GM13976 (cell line): ENCODE measurements at regions of chr1 and their contacts with region 1.

Region 1: DNA sequence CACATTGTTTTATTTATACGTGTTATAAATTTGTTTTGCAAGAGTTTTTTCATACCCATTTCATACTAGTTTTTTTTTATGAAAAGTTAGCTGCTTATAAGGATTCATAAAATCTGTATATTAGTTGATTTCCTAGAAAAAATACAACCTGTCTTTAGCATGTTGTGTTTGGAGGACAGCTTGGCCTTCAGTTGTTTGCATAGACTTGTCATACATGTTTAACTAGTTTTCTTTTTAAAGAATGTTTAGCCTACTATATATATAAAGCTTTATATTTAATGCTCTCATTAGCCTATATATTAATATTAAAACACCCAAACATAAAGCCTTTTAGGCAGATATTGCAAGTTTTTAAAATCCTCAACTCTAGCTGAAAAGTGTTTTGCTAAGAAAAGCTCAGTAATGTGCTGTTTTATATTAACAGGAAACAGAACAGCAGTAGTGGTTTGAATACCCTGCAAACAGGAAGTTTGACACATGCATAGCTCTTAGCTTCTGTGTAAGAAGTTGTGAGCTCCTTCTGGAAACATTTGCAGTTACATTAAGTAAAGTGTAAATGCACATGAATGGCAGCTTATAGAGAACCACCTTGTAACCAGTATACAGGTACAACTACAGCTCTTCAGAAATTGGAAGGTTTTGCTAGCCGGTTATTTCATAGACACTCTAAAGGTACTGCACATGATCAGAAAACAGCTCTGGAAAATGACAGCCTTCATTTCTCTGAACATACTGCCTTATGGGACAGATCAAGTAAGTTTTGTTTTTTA is at the start of gene PRKACB:
- DNase-seq: peak; percentile 19
- CTCF ChIP-seq: no peak

Region 2: DNA sequence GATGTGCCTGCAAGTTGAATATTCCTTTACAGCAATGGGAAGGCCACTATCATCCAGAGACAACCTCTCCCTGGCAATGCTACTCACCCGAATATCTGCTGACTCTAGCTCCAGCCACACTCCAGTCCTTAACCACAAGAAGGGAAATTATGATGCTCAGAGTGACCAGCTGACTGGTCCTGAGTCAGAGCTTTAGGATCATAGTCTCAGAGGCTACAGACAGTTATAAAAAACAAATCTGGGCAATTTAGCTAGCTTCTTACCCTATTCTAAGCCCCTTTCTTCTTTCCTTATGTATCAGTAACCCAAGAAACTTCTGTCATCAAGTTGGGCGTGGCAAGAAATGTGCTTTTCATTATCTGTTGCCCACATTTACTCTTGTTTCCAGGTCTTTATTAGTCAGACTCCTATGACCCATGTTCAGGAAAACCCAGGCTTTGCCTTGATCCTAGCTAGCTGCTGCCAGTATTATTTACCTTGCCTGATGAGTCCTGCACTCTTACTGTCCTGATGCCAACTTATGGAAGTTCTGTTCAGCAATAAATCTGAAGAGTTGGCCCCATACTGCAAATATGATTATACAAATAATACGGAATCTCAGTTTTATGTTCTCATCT is 352.1 kb before region 1 on chr1:
- in situ Hi-C with region 1: no loop called
- DNase-seq: no peak
- CTCF ChIP-seq: no peak

Region 3: GRCh38 chr1:84107955-84108354 is 36.0 kb before region 1 on chr1:
- in situ Hi-C with region 1: no loop called
- DNase-seq: no peak
- CTCF ChIP-seq: no peak

Region 4: DNA sequence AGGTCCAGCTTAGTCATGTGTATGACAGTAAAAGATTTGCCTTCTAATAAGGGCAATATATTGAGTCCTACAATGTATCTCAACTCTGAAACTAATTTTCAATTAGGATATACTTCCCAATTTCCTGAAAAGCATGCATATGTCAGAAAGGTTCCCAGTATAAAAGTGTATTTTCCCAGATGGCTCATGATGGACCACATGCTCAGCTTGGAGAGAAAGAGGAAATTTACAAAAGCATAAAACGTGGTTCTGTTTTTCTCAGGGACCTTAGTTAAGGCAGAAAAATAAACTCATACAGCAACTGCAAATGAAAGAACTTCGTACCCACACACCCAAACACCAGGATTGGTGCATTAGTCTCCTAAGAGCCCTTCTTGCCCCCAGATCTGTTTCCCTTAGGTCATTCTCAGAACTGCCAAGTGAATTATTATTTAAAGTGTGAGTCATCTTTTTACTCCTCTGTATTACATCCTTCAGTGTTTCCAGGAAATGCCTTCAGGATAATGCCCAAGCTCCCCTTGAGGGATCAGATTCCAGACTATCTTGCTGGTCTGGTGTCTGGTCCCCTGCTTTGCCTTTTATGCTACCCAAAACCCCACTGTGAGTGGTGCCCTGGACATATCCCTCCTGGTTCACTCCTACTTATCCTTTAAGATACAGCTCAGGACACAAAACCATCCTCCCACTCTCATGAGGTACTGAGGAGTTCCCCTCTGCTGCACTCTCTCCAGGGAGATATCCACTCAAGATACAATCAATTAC is 488.9 kb after region 1 on chr1:
- in situ Hi-C with region 1: loop called (anchors 25 kb)
- DNase-seq: no peak
- CTCF ChIP-seq: no peak

Region 5: GRCh38 chr1:84753516-84754385 is 609.8 kb after region 1 on chr1:
- in situ Hi-C with region 1: loop called (anchors 25 kb)
- DNase-seq: peak; percentile 81
- CTCF ChIP-seq: peak; percentile 98